Activated naive CD4-positive, alpha-beta T cell treated with anti-CD3 and anti-CD28 coated beads for 36 hours (primary cell): ENCODE measurements at regions of chr6 and their contacts with region 1.

Region 1: DNA sequence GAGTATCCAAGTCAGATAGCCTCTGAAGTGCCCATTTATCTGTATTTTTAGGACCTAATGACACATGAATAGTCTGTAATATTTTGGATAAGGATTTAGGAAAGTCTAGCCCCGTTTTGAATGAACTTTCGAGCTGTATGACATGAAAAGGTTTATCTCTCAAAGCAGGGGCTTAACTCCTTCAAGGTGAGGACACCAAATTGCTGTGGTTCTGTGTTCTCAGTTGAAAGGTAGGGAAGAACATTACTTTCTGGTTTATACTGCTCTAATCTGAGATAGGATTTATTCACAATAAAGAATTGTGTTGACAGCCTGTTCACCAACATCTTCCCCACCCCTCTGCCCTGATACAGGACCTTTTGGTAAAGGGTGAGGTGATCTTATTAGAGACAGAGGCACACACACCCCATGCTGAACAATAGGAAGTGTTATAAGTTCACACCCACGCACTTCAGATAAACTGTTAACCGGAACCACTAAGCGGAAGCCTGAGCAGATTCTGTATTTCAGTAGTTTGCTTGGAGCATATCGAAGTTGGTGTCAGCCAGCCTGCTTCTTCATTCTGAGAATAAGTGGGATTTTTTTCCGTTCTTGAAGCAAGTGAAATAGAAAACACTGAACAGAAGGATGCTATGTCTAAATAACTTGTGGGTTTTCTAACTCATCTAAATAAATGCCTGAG is 223.3 kb downstream of the TMEM242 start:
- DNase-seq: peak; percentile 80
- H3K4me3 Mint-ChIP-seq: no peak overlapping the region
- H3K27ac Mint-ChIP-seq: peak overlapping the region; percentile 84
- H3K4me1 Mint-ChIP-seq: peaks cover 55% of the 10 kb centered on the region
- H3K27me3 Mint-ChIP-seq: no peaks in the 10 kb centered on the region

Region 2: GRCh38 chr6:156191895-156192294 is 908.2 kb before region 1 on chr6:
- CTCF ChIA-PET with region 1: no interaction called
- intact Hi-C with region 1: loop called (anchors 10 kb)
- DNase-seq: no peak
- H3K4me3 Mint-ChIP-seq: peak overlapping the region; percentile 27
- H3K27ac Mint-ChIP-seq: peak overlapping the region; percentile 61
- H3K4me1 Mint-ChIP-seq: peaks cover 40% of the 10 kb centered on the region
- H3K27me3 Mint-ChIP-seq: no peaks in the 10 kb centered on the region

Region 3: DNA sequence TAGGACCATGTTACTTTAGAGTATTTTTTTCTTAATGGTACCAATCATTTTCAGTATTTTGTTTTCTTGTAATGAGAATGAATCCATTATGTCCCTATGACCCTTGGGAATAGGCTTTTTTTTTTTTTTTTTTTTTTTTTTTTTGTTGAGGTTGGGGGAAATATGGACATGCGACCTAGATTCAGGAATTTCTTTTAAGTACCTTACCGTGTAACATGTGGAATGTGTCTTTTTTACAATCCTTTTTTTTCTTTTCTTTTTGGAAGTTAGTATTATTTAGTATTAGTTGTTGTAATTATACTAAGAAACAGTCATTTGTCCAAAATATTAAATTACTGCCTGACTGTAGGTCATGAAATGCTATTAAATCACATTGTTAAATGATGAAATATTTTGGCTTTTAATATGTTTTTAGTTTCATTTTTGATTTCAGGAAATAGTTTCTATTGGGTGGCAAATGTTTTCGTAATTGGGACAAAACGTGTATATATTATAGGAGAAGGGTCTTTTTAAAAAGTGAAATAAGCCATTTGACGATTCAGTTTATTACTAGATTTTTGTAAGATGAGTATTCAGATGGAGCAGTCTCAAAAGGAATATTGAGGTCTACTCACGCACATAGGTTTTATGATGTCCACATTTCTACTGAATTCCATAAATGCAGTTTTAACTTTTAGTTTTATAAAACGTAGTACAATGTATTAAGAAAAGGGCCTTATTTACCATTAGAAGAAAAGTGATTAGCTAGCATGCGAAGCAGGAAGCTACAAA is 318.0 kb before region 1 on chr6:
- CTCF ChIA-PET with region 1: no interaction called
- intact Hi-C with region 1: loop called (anchors 2 kb)
- DNase-seq: no peak
- H3K4me3 Mint-ChIP-seq: peak overlapping the region; percentile 89
- H3K27ac Mint-ChIP-seq: peak overlapping the region; percentile 96
- H3K4me1 Mint-ChIP-seq: peaks cover 36% of the 10 kb centered on the region
- H3K27me3 Mint-ChIP-seq: no peaks in the 10 kb centered on the region

Region 4: DNA sequence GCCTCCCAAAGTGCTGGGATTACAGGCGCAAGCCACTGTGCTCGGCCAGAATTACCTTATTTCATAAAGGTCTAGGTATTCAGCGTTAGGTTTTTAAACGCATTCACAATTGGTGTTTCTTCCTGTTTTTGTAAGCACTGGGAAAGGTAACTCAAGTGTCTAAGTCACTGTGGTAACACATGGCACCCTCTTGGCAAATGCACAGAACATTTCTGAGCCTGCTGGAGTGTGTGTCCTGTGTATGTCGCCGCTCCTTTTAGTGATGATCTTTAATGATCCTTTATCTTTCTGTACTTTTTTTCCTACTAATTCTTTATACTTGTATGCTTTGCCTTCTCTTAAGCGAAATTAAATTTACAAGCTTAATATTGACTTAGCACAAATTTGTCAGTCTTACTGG is 59.9 kb before region 1 on chr6:
- CTCF ChIA-PET with region 1: no interaction called
- intact Hi-C with region 1: no loop called
- DNase-seq: no peak
- H3K4me3 Mint-ChIP-seq: no peak overlapping the region
- H3K27ac Mint-ChIP-seq: no peak overlapping the region
- H3K4me1 Mint-ChIP-seq: peaks cover 5% of the 10 kb centered on the region
- H3K27me3 Mint-ChIP-seq: no peaks in the 10 kb centered on the region

Region 5: GRCh38 chr6:157054531-157054979 is 45.5 kb before region 1 on chr6:
- CTCF ChIA-PET with region 1: no interaction called
- intact Hi-C with region 1: loop called (anchors 1 kb)
- DNase-seq: peak; percentile 67
- H3K4me3 Mint-ChIP-seq: peak overlapping the region; percentile 29
- H3K27ac Mint-ChIP-seq: peak overlapping the region; percentile 94
- H3K4me1 Mint-ChIP-seq: peaks cover 43% of the 10 kb centered on the region
- H3K27me3 Mint-ChIP-seq: no peaks in the 10 kb centered on the region

Region 6: GRCh38 chr6:157075549-157076450 is 24.3 kb before region 1 on chr6:
- CTCF ChIA-PET with region 1: interaction called, 4 read pairs
- intact Hi-C with region 1: loop called (anchors 1 kb)
- DNase-seq: peak; percentile 61
- H3K4me3 Mint-ChIP-seq: peak overlapping the region; percentile 41
- H3K27ac Mint-ChIP-seq: peak overlapping the region; percentile 85
- H3K4me1 Mint-ChIP-seq: peaks cover 53% of the 10 kb centered on the region
- H3K27me3 Mint-ChIP-seq: no peaks in the 10 kb centered on the region

Region 7: GRCh38 chr6:157428427-157429202 is 328.6 kb after region 1 on chr6:
- CTCF ChIA-PET with region 1: no interaction called
- intact Hi-C with region 1: no loop called
- DNase-seq: peak; percentile 94
- H3K4me3 Mint-ChIP-seq: peak overlapping the region; percentile 43
- H3K27ac Mint-ChIP-seq: peak overlapping the region; percentile 90
- H3K4me1 Mint-ChIP-seq: peaks cover 43% of the 10 kb centered on the region
- H3K27me3 Mint-ChIP-seq: no peaks in the 10 kb centered on the region